ENCODE measurements at regions of chr1 and their contacts with region 1.

Region 1: DNA sequence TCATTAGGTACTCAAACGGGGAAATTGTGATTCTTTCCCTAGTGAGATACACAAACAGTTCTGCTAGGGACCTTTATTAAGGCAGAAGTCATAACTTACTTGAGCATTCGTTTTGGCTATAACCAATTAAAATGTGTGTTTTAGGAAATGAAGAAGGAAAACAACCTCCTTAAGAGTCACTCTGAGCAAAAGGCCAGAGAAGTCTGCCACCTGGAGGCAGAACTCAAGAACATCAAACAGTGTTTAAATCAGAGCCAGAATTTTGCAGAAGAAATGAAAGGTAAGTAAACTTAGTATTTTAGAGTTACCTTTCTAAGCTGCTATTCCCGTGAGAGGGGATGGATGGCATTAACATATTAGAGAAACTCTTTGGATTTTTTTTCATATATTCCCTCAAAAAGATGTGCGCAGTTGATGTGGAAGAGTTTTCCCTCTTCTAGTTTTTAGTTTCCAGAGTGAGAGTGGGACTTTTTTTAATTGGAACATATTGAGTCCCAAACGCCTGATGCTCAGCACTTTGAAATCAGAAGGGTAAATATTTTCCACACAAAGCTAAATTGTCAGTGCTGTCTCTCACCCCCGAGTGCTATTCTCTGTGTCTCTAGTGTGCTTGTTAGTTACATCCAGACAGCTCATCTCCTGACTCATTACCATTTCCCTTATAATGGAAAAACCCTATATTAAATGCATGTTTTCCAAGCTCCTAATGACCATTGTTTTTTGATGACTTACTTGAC is 34.9 kb downstream of the CENPF start:
- DNase-seq: no peak
- H3K4me3 ChIP-seq: no peak overlapping the region
- H3K27ac ChIP-seq: no peak overlapping the region
- H3K4me1 ChIP-seq: no peaks in the 10 kb centered on the region
- H3K27me3 ChIP-seq: no peaks in the 10 kb centered on the region
- CTCF ChIP-seq: peak in 2 of 3 experiments; percentile 53 to 66; a peak in 3 of 4 replicates
- EP300 ChIP-seq: no peak
- POLR2A ChIP-seq: no peak
- RAD21 ChIP-seq: peak; percentile 33 to 44; a peak in 3 of 4 replicates

Region 2: DNA sequence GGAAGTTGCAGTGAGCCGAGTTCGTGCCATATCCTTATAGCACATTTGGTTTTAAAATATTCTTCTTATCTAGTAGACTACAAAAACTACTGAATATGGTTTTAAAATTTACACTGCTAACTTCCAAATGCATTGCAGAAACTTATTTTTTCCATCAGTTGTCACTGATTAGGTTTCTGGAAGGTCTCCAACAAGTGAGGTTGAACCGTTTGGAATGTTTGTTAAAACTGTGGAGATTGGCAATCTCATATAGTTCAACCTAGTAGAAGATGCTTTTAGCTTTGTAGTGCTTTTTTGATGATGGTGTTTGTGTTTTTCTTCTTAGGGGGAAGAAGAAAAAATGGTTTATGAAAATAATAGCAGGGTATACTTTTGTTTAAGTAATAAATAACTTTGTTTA is 22.0 kb before region 1 on chr1:
- CTCF ChIA-PET with region 1: interaction called, 17 read pairs
- POLR2A ChIA-PET with region 1: no interaction called
- DNase-seq: no peak
- H3K4me3 ChIP-seq: no peak overlapping the region
- H3K27ac ChIP-seq: no peak overlapping the region
- H3K4me1 ChIP-seq: no peaks in the 10 kb centered on the region
- H3K27me3 ChIP-seq: no peaks in the 10 kb centered on the region
- CTCF ChIP-seq: no peak
- EP300 ChIP-seq: no peak
- POLR2A ChIP-seq: no peak
- RAD21 ChIP-seq: no peak

Region 3: GRCh38 chr1:214621236-214621635 is 16.7 kb before region 1 on chr1:
- CTCF ChIA-PET with region 1: interaction called, 17 read pairs
- POLR2A ChIA-PET with region 1: no interaction called
- DNase-seq: no peak
- H3K4me3 ChIP-seq: no peak overlapping the region
- H3K27ac ChIP-seq: no peak overlapping the region
- H3K4me1 ChIP-seq: no peaks in the 10 kb centered on the region
- H3K27me3 ChIP-seq: no peaks in the 10 kb centered on the region
- CTCF ChIP-seq: no peak
- EP300 ChIP-seq: no peak
- POLR2A ChIP-seq: no peak
- RAD21 ChIP-seq: no peak

Region 4: DNA sequence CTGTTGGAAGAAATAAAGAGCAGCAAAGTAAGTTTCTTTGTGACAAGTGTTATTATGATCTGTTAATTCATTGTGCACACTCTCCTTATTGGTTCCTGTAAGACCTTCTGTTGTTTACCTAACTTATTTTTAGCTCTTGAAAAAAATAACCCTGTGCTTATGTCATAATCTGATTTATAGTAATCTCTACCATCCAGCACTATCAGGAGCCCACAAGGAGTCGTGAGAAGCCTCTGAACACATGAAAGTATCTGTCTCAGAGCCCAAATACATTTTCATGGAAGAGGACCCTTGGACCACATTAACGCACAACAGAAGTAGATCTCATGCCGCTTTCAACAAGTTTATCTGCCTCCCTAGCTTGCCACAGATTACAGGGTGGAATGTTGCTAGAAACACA is 10.9 kb after region 1 on chr1:
- CTCF ChIA-PET with region 1: interaction called, 41 read pairs
- POLR2A ChIA-PET with region 1: interaction called, 5 read pairs
- DNase-seq: no peak
- H3K4me3 ChIP-seq: no peak overlapping the region
- H3K27ac ChIP-seq: no peak overlapping the region
- H3K4me1 ChIP-seq: no peaks in the 10 kb centered on the region
- H3K27me3 ChIP-seq: no peaks in the 10 kb centered on the region
- CTCF ChIP-seq: no peak
- EP300 ChIP-seq: no peak
- POLR2A ChIP-seq: no peak
- RAD21 ChIP-seq: no peak

Region 5: DNA sequence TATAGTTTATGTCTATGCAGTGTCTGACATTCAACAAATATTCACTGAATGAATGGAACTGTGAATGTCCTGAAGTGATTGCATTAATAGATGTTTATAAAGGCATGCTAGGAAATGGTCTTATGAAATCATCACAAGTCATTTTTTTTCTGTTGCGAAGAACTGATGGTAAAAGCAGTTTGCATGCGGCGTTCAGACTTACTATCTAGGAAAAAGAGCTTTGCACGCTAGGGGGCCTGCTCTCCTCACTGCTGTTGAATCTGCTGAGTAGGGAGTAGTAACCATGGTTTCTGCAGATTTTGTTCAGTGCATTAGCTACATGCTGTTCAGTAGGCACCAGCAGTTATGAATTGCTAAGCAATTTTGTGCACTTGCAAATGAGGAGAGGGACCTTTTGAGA is 23.0 kb after region 1 on chr1:
- CTCF ChIA-PET with region 1: interaction called, 16 read pairs
- POLR2A ChIA-PET with region 1: no interaction called
- DNase-seq: no peak
- H3K4me3 ChIP-seq: no peak overlapping the region
- H3K27ac ChIP-seq: no peak overlapping the region
- H3K4me1 ChIP-seq: no peaks in the 10 kb centered on the region
- H3K27me3 ChIP-seq: no peaks in the 10 kb centered on the region
- CTCF ChIP-seq: peak in 2 of 3 experiments; percentile 7 to 32; a peak in 2 of 4 replicates
- EP300 ChIP-seq: no peak
- POLR2A ChIP-seq: no peak
- RAD21 ChIP-seq: peak; percentile 32 to 46

Region 6: GRCh38 chr1:214707306-214708087 is 69.6 kb after region 1 on chr1:
- CTCF ChIA-PET with region 1: no interaction called
- POLR2A ChIA-PET with region 1: no interaction called
- DNase-seq: no peak
- H3K4me3 ChIP-seq: no peak overlapping the region
- H3K27ac ChIP-seq: no peak overlapping the region
- H3K4me1 ChIP-seq: no peaks in the 10 kb centered on the region
- H3K27me3 ChIP-seq: no peaks in the 10 kb centered on the region
- CTCF ChIP-seq: no peak
- EP300 ChIP-seq: no peak
- POLR2A ChIP-seq: no peak
- RAD21 ChIP-seq: no peak

Region 7: DNA sequence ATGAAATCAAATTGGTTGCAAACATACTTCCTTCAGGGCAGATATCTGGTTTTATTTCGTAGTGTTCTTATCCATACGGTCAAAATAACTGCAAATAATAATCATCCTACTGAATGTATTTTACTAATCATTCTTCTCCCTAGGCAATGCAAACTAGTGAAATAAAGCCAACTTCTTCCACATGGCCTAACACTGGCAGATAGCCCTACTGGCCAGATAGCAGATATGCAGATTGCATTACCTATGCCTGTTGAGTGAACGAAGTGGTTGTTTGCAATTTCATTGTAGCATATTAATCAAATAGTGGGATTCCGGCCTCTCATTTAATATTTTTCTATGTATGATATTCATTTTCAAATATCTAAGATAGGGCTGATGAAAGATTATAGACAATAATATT is 81.3 kb after region 1 on chr1:
- CTCF ChIA-PET with region 1: no interaction called
- POLR2A ChIA-PET with region 1: no interaction called
- DNase-seq: no peak
- H3K4me3 ChIP-seq: no peak overlapping the region
- H3K27ac ChIP-seq: no peak overlapping the region
- H3K4me1 ChIP-seq: no peaks in the 10 kb centered on the region
- H3K27me3 ChIP-seq: no peaks in the 10 kb centered on the region
- CTCF ChIP-seq: peak in 1 of 3 experiments; percentile 37; a peak in 1 of 4 replicates
- EP300 ChIP-seq: no peak
- POLR2A ChIP-seq: no peak
- RAD21 ChIP-seq: peak in 1 of 2 experiments; percentile 38; a peak in 1 of 4 replicates

Measured in H1 (cell line).